Activated CD4-positive, alpha-beta T cell treated with anti-CD3 and anti-CD28 coated beads, Interleukin-2, amount 10 ng/mL, durations not matched to agents 7 days and 5 days (primary cell): ENCODE measurements at regions of chr1 and their contacts with region 1.

Region 1: GRCh38 chr1:152001391-152002249 is 8.0 kb upstream of the S100A10 start:
- DNase-seq: peak; percentile 84
- H3K4me3 Mint-ChIP-seq: no peak overlapping the region
- H3K27ac Mint-ChIP-seq: no peak overlapping the region
- H3K4me1 Mint-ChIP-seq: peaks cover 16% of the 10 kb centered on the region
- H3K27me3 Mint-ChIP-seq: peaks cover 38% of the 10 kb centered on the region

Region 2: DNA sequence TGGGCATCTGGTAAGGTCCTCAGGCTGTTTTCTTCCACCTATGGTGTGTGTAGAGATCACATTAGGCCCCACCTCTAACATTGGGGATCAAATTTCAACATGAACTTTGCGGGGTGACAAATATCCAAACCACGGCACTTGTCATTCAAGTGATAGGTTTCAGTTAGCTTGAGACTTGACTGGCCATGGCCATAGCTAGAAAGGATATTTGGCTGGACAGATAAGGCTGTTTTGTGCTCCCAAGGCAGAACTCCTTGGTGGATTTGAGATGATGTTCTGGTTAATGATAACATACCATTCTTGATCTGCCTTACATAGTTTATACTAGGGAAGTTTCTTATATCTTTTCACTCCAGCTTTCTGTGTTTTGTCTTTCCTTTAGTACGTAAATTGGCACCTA is 333.5 kb before region 1 on chr1:
- CTCF ChIA-PET with region 1: no interaction called
- POLR2A ChIA-PET with region 1: no interaction called
- DNase-seq: no peak
- H3K4me3 Mint-ChIP-seq: no peak overlapping the region
- H3K27ac Mint-ChIP-seq: no peak overlapping the region
- H3K4me1 Mint-ChIP-seq: peaks cover 7% of the 10 kb centered on the region
- H3K27me3 Mint-ChIP-seq: no peaks in the 10 kb centered on the region

Region 3: DNA sequence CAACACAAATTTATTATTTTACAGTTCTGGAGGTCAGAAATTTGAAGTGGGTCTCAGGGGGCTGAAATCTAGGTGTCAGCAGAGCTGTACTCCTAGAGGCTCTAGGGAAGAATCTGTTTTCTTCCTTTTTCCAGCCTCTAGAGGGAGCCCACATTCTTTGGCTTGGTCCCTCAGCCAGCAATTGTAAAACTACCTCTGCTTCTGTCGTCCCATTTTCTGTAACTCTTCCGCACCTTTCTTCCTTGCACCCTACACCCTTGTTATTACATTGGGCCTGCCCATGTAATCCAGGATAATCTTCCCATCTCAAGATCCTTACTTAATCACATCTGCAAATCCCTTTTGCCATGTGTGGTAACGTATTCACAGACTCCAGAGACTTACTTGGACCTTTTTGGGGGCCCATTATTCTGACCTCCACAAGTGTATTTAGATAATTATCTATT is 67.5 kb before region 1 on chr1:
- CTCF ChIA-PET with region 1: interaction called, 33 read pairs
- POLR2A ChIA-PET with region 1: no interaction called
- DNase-seq: peak; percentile 62
- H3K4me3 Mint-ChIP-seq: no peak overlapping the region
- H3K27ac Mint-ChIP-seq: no peak overlapping the region
- H3K4me1 Mint-ChIP-seq: peaks cover 5% of the 10 kb centered on the region
- H3K27me3 Mint-ChIP-seq: peaks cover 4% of the 10 kb centered on the region

Region 4: DNA sequence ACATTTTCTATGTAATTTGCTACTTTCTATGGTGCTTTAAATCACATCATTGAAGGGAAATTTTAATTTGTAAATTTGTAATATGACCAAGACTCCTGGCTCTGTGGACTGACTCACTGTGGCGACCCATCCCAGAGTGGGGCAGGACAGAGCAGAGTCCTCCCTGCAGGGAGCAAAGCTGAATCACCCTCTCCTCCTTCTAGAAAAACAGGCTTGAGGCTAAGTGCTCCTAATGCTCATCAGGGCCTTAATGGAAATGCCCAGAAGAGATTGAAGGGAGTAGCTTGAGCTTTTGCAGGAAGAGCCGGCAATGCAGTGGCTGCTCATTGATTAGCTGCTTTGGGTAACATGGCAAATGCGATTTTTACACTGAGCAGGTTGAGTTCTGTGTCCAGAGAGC is 24.8 kb before region 1 on chr1:
- CTCF ChIA-PET with region 1: interaction called, 11 read pairs
- POLR2A ChIA-PET with region 1: no interaction called
- DNase-seq: no peak
- H3K4me3 Mint-ChIP-seq: no peak overlapping the region
- H3K27ac Mint-ChIP-seq: no peak overlapping the region
- H3K4me1 Mint-ChIP-seq: peaks cover 25% of the 10 kb centered on the region
- H3K27me3 Mint-ChIP-seq: peaks cover 5% of the 10 kb centered on the region

Region 5: GRCh38 chr1:151984313-151984956 is 17.2 kb before region 1 on chr1:
- CTCF ChIA-PET with region 1: interaction called, 19 read pairs
- POLR2A ChIA-PET with region 1: no interaction called
- DNase-seq: peak; percentile 42
- H3K4me3 Mint-ChIP-seq: no peak overlapping the region
- H3K27ac Mint-ChIP-seq: peak overlapping the region; percentile 57
- H3K4me1 Mint-ChIP-seq: peaks cover 62% of the 10 kb centered on the region
- H3K27me3 Mint-ChIP-seq: no peaks in the 10 kb centered on the region

Region 6: DNA sequence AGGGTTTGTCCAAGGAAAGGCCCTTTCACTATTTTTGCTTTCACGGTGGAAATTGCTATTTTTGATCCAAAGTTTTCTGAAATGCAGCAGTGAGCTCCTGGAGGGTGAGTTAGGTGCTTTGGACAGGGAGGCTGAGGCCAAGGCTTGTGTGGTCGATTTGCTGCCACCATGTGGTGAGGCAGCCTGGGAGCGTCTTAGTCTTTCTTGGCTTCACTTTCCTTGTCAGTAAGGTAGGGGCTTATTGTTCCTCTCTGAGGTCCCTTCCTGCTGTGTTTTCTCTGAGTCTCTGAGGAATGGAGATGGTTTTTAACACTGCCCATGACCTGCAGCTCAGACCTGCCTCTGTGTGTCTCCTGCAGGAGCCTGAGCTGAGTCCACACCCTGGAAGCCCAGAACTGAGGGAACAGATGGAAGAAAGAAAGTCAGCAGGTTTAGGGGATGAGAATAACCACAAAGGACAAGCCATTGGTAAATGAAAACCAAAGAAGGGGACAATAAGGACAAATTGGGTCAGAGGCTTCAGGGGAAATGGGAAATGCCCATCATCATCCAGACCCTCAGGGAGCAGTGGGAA is 12.1 kb after region 1 on chr1:
- CTCF ChIA-PET with region 1: interaction called, 14 read pairs
- POLR2A ChIA-PET with region 1: no interaction called
- DNase-seq: peak; percentile 58
- H3K4me3 Mint-ChIP-seq: no peak overlapping the region
- H3K27ac Mint-ChIP-seq: no peak overlapping the region
- H3K4me1 Mint-ChIP-seq: peaks cover 4% of the 10 kb centered on the region
- H3K27me3 Mint-ChIP-seq: peaks cover 29% of the 10 kb centered on the region

Region 7: GRCh38 chr1:152044386-152044785 is 42.8 kb after region 1 on chr1:
- CTCF ChIA-PET with region 1: no interaction called
- POLR2A ChIA-PET with region 1: no interaction called
- DNase-seq: no peak
- H3K4me3 Mint-ChIP-seq: no peak overlapping the region
- H3K27ac Mint-ChIP-seq: no peak overlapping the region
- H3K4me1 Mint-ChIP-seq: peaks cover 33% of the 10 kb centered on the region
- H3K27me3 Mint-ChIP-seq: peaks cover 2% of the 10 kb centered on the region

Region 8: DNA sequence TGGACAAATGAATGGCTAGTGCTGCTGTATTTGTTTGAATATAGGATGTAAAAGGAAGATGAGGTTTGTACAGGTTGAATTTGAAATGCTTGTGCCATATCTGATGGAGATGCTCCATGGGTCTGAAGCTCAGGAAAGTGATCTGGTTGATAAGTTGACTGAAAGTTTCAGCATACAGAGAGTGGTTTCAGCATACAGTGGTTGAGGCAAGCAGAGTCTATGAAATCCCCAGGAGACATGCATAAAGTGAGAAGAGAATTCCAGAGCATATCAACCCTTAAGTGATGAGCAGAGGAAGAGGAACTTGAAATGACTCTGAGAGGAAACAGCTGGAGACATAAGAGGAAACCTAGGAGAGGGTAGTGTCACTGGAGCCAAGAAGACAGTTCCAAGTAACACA is 65.5 kb after region 1 on chr1:
- CTCF ChIA-PET with region 1: no interaction called
- POLR2A ChIA-PET with region 1: no interaction called
- DNase-seq: no peak
- H3K4me3 Mint-ChIP-seq: no peak overlapping the region
- H3K27ac Mint-ChIP-seq: no peak overlapping the region
- H3K4me1 Mint-ChIP-seq: no peaks in the 10 kb centered on the region
- H3K27me3 Mint-ChIP-seq: peaks cover 36% of the 10 kb centered on the region

Region 9: GRCh38 chr1:152141974-152142584 is 140.5 kb after region 1 on chr1:
- CTCF ChIA-PET with region 1: no interaction called
- POLR2A ChIA-PET with region 1: no interaction called
- DNase-seq: peak; percentile 10
- H3K4me3 Mint-ChIP-seq: no peak overlapping the region
- H3K27ac Mint-ChIP-seq: no peak overlapping the region
- H3K4me1 Mint-ChIP-seq: no peaks in the 10 kb centered on the region
- H3K27me3 Mint-ChIP-seq: peaks cover 45% of the 10 kb centered on the region